Activated CD4-positive, alpha-beta T cell treated with anti-CD3 and anti-CD28 coated beads for 36 hours (primary cell): ENCODE measurements at regions of chr18 and their contacts with region 1.

Region 1: DNA sequence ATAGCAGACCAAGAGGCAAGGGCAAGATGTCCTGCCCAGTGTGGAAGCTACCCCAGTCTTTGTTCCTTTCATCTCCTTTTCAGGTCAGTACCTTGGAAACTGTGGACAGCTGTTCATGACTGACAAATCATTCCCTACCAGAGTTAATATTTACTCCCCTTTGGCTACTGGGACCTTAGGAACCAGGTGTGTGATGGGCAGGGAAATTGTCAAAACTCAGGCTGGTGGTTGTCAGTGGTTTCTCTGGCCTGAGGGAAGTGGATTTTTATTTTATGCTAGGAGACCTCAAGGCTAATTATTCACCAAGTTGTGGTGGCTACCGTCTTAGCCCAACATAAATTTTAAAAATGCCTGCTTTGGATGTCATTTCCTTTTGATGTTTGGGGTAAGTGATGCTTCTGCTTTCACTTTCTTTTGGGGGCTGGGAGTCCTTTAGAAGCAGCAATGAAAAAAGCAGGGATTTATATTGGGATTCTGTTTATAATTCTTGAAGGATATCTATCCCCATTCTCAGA is 119.3 kb downstream of the SETBP1 start:
- DNase-seq: no peak
- ATAC-seq: peak; percentile 14
- H3K4me3 Mint-ChIP-seq: no peak overlapping the region
- H3K27ac Mint-ChIP-seq: peak overlapping the region; percentile 2
- H3K4me1 Mint-ChIP-seq: peaks cover 58% of the 10 kb centered on the region
- H3K27me3 Mint-ChIP-seq: peaks cover 4% of the 10 kb centered on the region

Region 2: DNA sequence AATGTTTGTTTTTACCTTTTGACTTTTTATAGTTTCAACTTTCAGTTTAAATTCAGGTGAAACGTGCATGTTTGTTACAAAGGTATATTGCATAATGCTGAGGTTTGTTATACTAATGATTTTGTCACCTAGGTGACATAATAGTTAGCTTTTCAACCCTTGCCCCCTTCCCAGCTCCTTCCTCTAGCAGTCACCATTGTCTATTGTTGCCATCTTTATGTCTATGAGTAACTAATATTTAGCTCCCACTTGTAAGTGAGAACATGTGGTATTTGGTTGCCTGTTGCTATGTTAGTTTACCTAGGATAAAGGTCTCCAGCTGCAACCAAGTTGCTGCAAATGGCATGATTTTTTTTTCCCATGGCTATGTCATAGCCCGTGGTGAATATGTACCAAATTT is 441.6 kb before region 1 on chr18:
- CTCF ChIA-PET with region 1: no interaction called
- POLR2A ChIA-PET with region 1: no interaction called
- intact Hi-C with region 1: no loop called
- DNase-seq: no peak
- ATAC-seq: no peak
- H3K4me3 Mint-ChIP-seq: no peak overlapping the region
- H3K27ac Mint-ChIP-seq: no peak overlapping the region
- H3K4me1 Mint-ChIP-seq: no peaks in the 10 kb centered on the region
- H3K27me3 Mint-ChIP-seq: no peaks in the 10 kb centered on the region

Region 3: GRCh38 chr18:44725300-44726096 is 74.5 kb before region 1 on chr18:
- CTCF ChIA-PET with region 1: interaction called, 3 read pairs
- POLR2A ChIA-PET with region 1: interaction called, 3 read pairs
- intact Hi-C with region 1: loop called (anchors 2 to 5 kb)
- DNase-seq: peak; percentile 81
- ATAC-seq: peak; percentile 78
- H3K4me3 Mint-ChIP-seq: peak overlapping the region; percentile 17
- H3K27ac Mint-ChIP-seq: peak overlapping the region; percentile 80
- H3K4me1 Mint-ChIP-seq: peaks cover 80% of the 10 kb centered on the region
- H3K27me3 Mint-ChIP-seq: peaks cover 2% of the 10 kb centered on the region

Region 4: DNA sequence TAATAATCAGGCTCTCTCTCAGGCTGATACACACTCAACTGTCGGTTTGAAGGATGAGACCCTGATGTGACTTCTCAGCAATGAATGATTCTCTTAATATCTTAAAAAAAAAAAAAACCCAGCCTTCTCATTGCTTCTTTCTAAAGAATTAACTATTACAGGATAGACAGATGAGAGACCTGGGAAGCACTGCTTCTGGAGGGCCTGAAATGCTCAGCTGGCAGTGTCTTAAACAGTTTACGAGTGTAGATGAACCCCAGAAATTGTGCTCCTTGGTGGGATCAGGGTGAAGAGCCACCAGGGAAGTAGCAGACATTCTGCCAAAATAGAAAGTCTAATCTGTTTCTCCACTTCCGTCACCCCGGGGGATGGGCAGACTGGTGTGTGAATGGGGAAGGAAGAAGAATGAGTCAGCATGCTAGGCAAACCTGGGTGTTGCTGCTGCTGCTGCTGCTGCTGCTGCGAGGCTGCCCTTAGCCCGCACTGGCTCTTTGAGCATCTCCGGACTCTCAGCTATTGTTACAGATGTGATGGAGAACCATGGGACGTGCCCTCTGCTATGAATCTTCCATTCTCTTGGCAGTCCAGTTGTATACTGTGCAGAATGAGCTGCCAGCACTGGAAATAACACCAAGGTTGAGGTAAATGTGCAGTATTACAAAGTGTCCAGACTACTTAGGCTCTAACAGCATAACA is 39.2 kb after region 1 on chr18:
- CTCF ChIA-PET with region 1: no interaction called
- POLR2A ChIA-PET with region 1: no interaction called
- intact Hi-C with region 1: no loop called
- DNase-seq: peak; percentile 83
- ATAC-seq: peak; percentile 99
- H3K4me3 Mint-ChIP-seq: no peak overlapping the region
- H3K27ac Mint-ChIP-seq: peak overlapping the region; percentile 30
- H3K4me1 Mint-ChIP-seq: peaks cover 10% of the 10 kb centered on the region
- H3K27me3 Mint-ChIP-seq: no peaks in the 10 kb centered on the region

Region 5: GRCh38 chr18:44895176-44895798 is 95.3 kb after region 1 on chr18:
- CTCF ChIA-PET with region 1: interaction called, 3 read pairs
- POLR2A ChIA-PET with region 1: no interaction called
- intact Hi-C with region 1: loop called (anchors 1 to 5 kb)
- DNase-seq: peak; percentile 62
- ATAC-seq: peak; percentile 45
- H3K4me3 Mint-ChIP-seq: no peak overlapping the region
- H3K27ac Mint-ChIP-seq: peak overlapping the region; percentile 27
- H3K4me1 Mint-ChIP-seq: peaks cover 51% of the 10 kb centered on the region
- H3K27me3 Mint-ChIP-seq: peaks cover 2% of the 10 kb centered on the region

Region 6: GRCh38 chr18:45353530-45353929 is 553.6 kb after region 1 on chr18:
- CTCF ChIA-PET with region 1: no interaction called
- POLR2A ChIA-PET with region 1: no interaction called
- intact Hi-C with region 1: no loop called
- DNase-seq: no peak
- ATAC-seq: no peak
- H3K4me3 Mint-ChIP-seq: no peak overlapping the region
- H3K27ac Mint-ChIP-seq: no peak overlapping the region
- H3K4me1 Mint-ChIP-seq: no peaks in the 10 kb centered on the region
- H3K27me3 Mint-ChIP-seq: peaks cover 13% of the 10 kb centered on the region